Activated T-helper 2 cell treated with anti-CD3 and anti-CD28 coated beads, Interferon-gamma antibody, Interleukin-2, Interleukin-4, amounts not matched to agents 10 μg/mL and 5 μg/mL and 100 μg/mL, durations not matched to agents 14 hours and 24 hours and 36 hours (primary cell): ENCODE measurements at regions of chr5 and their contacts with region 1.

Region 1: DNA sequence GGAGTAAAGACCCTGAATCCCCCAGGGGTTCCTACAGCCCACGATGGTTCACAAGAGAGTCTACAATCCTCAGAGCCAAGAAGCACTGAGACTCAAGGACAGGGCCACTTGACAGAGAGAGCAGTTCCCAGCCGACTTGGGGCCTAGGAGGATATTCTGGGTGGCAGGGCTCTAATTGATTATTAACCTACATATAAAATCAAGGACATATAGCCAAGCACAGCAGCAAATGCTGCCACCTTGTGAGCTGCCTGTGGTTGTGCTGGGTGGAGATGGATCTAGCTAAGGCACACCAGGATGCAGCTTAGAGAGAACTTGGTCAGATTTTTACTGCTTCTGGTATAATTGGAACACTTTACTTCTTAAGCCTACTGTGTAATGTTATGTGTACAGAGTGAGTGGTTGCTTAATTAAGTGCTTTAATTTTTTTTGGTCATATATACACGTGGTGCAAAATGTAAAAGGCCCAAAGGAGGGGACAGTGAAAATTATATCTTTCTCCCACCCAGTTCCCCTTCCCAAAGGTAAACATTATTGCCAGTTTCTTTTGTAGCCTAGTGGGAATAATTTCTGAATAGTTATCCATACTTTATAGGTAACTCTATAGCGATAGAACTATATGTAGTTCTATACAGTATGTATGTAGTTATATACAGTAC is 78.8 kb downstream of the F2RL2 start:
- DNase-seq: peak; percentile 33
- H3K4me3 Mint-ChIP-seq: peak overlapping the region; percentile 75
- H3K27ac Mint-ChIP-seq: peak overlapping the region; percentile 90
- H3K4me1 Mint-ChIP-seq: peaks cover 83% of the 10 kb centered on the region
- H3K27me3 Mint-ChIP-seq: no peaks in the 10 kb centered on the region

Region 2: GRCh38 chr5:75717082-75717922 is 827.1 kb before region 1 on chr5 and contains the start of gene POC5:
- intact Hi-C with region 1: loop called (anchors 10 kb)
- DNase-seq: peak; percentile 97
- H3K4me3 Mint-ChIP-seq: peak within 1 kb of the TSS; percentile 100
- H3K27ac Mint-ChIP-seq: peak within 1 kb of the TSS; percentile 100
- H3K4me1 Mint-ChIP-seq: peaks cover 29% of the 10 kb centered on the region
- H3K27me3 Mint-ChIP-seq: peaks cover 10% of the 10 kb centered on the region
- total RNA-seq, gene POC5: 16.2 and 16.5 TPM in 2 replicates

Region 3: DNA sequence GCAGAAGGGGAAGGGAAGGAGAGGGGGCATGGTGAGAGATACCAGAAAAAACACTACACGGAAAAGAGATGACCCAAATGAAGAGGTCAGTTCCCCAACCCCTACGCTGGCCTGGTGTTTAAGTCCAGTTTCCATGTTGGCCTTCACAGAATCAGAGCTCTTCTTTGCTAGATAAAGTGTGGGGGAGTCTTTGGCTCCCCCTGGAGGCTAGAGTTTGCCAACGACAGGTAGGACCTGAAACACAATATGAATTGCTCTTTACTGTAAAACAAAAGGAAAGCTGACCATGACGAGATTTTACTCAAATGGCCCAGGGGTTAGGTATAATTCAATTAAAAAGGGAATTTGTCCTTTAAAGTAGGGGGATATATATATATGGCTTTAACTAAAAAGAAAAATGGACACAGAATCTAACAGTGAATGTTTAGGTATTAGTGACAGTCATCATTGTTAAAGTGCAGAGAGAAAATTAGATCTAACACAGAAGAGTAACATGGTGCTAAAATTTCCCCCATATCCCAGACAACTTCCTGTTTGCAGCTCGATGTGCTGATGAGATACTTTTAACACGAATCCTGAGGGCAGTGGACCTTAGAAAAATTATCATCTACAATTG is 369.2 kb before region 1 on chr5:
- intact Hi-C with region 1: no loop called
- DNase-seq: peak; percentile 28
- H3K4me3 Mint-ChIP-seq: no peak overlapping the region
- H3K27ac Mint-ChIP-seq: no peak overlapping the region
- H3K4me1 Mint-ChIP-seq: peaks cover 18% of the 10 kb centered on the region
- H3K27me3 Mint-ChIP-seq: peaks cover 7% of the 10 kb centered on the region

Region 4: GRCh38 chr5:76331126-76331525 is 213.3 kb before region 1 on chr5:
- intact Hi-C with region 1: loop called (anchors 2 kb)
- DNase-seq: peak; percentile 58
- H3K4me3 Mint-ChIP-seq: peak overlapping the region; percentile 37
- H3K27ac Mint-ChIP-seq: peak overlapping the region; percentile 69
- H3K4me1 Mint-ChIP-seq: peaks cover 64% of the 10 kb centered on the region
- H3K27me3 Mint-ChIP-seq: no peaks in the 10 kb centered on the region

Region 5: GRCh38 chr5:76521240-76521758 is 23.1 kb before region 1 on chr5:
- intact Hi-C with region 1: loop called (anchors 1 kb)
- DNase-seq: no peak
- H3K4me3 Mint-ChIP-seq: peak overlapping the region; percentile 24
- H3K27ac Mint-ChIP-seq: peak overlapping the region; percentile 82
- H3K4me1 Mint-ChIP-seq: peaks cover 49% of the 10 kb centered on the region
- H3K27me3 Mint-ChIP-seq: no peaks in the 10 kb centered on the region

Region 6: DNA sequence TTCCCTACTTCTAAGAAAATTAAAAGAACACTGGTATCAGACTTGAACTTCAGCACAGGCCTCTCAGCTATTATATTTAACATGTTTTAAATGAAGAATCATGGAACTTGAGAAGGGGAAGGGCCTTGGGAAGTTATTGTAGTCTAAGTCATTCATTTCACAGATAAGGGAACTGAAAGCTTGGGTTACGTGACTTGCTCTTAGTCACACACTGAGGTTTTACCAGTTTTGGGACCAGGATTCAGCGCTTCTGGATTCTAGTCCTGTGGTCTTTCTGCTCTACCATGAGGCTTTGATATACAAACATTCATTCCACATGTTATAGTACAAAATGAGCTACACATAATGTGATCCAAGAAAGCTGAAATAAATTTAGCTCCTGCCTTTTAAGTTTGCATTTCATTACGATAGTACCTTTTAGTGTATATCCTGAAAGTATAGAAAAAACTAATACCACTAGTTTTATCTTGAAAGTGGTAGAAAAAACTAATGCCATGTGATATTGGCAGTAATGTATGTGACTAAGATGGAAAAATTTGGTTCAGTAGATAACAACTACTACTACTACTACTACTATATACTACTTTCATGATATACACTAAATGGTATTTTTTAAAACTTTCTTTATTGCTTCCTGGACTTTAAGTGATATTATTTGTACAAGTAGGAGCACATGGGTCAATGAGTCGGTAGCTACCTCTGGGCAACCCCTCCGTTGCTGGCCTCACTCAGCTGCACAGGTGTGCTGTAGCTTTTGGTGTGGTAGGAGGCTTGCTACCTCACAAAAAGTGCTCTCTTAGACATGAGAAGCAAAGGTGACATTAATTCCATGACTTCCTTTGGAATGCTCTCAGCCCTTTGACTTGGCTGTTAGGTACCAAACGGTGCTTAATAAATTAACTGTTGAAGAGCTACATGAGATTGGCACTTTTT is 38.1 kb after region 1 on chr5:
- intact Hi-C with region 1: loop called (anchors 1 kb)
- DNase-seq: no peak
- H3K4me3 Mint-ChIP-seq: no peak overlapping the region
- H3K27ac Mint-ChIP-seq: peak overlapping the region; percentile 69
- H3K4me1 Mint-ChIP-seq: peaks cover 26% of the 10 kb centered on the region
- H3K27me3 Mint-ChIP-seq: no peaks in the 10 kb centered on the region